ENCODE measurements at regions of chr17 and their contacts with region 1.

Region 1: GRCh38 chr17:2592971-2593820 is at the start of gene PAFAH1B1:
- DNase-seq: peak; percentile 85
- ATAC-seq: peak; percentile 81
- H3K4me3 ChIP-seq: peak within 1 kb of the TSS; percentile 99
- H3K27ac ChIP-seq: peak within 1 kb of the TSS; percentile 90
- H3K4me1 ChIP-seq: peaks cover 19% of the 10 kb centered on the region
- H3K27me3 ChIP-seq: no peaks in the 10 kb centered on the region
- CTCF ChIP-seq: 0 out of 2 replicates have a peak, but pooled peaks have one; percentile 7
- total RNA-seq, gene PAFAH1B1: 45.0 and 49.1 TPM in 2 replicates

Region 2: DNA sequence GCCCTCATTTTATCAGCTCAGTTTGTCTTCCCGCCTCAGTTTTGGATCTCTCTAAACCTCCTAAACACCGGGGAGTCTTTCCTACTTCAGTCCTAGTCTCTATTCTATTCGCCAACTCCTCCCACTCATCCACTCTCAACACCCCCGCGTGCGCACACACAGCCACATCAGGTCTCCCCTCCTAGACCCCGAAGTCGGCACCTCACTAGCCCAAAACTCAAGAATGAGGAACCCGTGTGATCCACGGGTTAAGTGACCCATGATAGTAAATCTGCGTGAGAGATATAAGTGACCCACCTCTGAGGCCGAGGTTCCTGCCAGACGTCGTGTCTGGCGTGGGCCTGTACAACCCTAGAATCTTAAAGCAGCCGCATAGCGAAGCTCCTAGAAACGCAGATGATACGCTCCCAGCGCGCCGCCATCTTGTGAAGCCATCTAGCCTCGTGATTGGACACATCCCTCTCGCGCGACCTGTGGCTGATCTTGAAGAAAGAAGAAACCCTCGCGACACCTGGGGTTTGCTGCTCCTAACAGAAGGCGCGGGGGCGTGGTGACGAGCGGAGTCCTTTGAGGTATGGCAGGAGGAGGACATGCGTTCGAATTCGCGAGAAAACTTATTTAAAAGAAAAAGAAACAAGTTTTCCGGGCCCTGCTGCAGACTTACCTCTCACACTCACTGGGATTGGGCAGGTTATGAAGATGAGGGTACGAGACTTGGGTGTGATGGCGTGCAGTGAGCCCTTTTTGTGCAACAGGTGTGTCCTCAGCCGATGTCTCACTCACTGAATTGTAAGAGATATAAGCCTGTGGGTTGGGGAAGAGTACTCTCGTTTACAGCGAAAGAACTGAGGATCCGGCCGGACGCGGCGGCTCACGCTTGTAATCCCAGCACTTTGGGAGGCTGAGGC is 81.5 kb before region 1 on chr17 and contains the start of gene METTL16:
- CTCF ChIA-PET with region 1: no interaction called
- POLR2A ChIA-PET with region 1: no interaction called
- intact Hi-C with region 1: loop called (anchors 5 kb)
- DNase-seq: peak; percentile 95
- ATAC-seq: peak; percentile 98
- H3K4me3 ChIP-seq: peak within 1 kb of the TSS; percentile 90
- H3K27ac ChIP-seq: peak within 1 kb of the TSS; percentile 86
- H3K4me1 ChIP-seq: peaks cover 7% of the 10 kb centered on the region
- H3K27me3 ChIP-seq: no peaks in the 10 kb centered on the region
- CTCF ChIP-seq: no peak
- total RNA-seq, gene METTL16: 20.7 and 20.8 TPM in 2 replicates

Region 3: DNA sequence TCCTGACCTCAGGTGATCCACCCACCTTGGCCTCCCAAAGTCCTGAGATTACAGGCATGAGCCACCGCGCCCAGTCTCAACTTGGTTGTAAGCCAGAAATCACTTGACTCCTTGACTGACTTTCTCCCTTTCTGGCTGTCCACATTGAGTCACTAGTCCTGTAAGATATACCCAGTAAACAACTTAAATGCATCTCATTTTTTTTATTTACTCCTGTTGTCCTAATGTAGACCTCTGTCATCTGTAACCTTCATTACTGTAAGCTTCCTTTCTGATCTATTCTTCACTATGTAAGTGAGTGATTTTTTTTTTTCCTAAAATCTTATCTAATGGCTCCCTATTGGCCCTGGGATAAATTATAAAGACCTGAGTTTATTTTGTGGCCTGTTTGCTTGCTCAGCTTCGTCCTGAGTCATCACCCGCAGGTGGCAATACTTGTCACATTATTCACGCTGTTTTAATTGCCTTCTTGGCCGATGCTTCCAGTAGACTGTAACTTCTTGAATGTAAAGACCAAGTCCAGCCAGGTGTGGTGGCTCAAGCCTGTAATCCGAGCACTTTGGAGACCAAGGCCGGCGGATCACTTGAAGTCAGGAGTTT is 41.3 kb after region 1 on chr17:
- CTCF ChIA-PET with region 1: no interaction called
- POLR2A ChIA-PET with region 1: no interaction called
- intact Hi-C with region 1: loop called (anchors 5 kb)
- DNase-seq: peak; percentile 88
- ATAC-seq: peak; percentile 93
- H3K4me3 ChIP-seq: no peak overlapping the region
- H3K27ac ChIP-seq: peak overlapping the region; percentile 63
- H3K4me1 ChIP-seq: peaks cover 18% of the 10 kb centered on the region
- H3K27me3 ChIP-seq: no peaks in the 10 kb centered on the region
- CTCF ChIP-seq: no peak

Region 4: GRCh38 chr17:2656283-2656682 is 63.1 kb after region 1 on chr17:
- CTCF ChIA-PET with region 1: no interaction called
- POLR2A ChIA-PET with region 1: interaction called, 12 read pairs
- intact Hi-C with region 1: loop called (anchors 10 kb)
- DNase-seq: no peak
- ATAC-seq: no peak
- H3K4me3 ChIP-seq: no peak overlapping the region
- H3K27ac ChIP-seq: no peak overlapping the region
- H3K4me1 ChIP-seq: peaks cover 2% of the 10 kb centered on the region
- H3K27me3 ChIP-seq: no peaks in the 10 kb centered on the region
- CTCF ChIP-seq: no peak